ENCODE measurements at regions of chr1 and their contacts with region 1.

Region 1: DNA sequence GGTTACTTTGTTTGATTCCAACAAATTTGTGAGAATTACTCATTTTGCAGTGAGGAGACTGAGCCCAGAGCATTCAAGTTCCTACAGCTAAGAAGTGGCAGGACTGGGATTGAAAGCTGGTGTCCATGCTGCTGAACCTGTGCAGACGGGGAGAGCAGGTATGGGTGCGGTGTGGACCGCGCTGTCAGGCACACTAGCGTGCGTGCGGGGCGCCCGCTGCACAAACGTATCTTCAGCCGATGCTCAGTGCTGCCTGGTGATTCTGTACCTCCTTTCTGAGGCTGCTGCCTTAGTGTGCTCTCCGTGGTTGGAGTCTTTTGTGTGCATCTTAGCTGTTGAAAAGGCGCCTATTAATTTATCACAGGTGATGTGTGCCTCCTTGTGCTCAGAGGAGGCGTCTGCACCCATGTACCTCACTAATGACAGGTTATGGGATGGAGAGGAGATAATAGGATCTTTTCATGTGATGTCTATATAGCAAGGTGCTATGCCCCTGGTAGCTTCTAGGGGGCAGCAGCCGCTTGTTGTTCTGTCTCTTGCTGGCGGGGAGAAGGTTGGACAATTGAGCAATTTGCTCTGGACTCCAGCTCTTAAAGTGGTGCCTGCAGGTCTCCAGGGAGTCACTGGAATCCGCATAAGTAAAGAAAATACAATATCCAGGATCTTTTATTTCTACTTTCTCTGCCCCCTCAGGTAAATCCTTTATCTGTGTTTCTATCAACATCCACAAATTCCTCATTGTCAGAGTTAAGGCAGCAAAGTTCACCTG is 32.5 kb downstream of the PEX14 start:
- DNase-seq: peak; percentile 85

Region 2: GRCh38 chr1:10170239-10170574 is 337.1 kb before region 1 on chr1:
- intact Hi-C with region 1: no loop called
- DNase-seq: no peak

Region 3: DNA sequence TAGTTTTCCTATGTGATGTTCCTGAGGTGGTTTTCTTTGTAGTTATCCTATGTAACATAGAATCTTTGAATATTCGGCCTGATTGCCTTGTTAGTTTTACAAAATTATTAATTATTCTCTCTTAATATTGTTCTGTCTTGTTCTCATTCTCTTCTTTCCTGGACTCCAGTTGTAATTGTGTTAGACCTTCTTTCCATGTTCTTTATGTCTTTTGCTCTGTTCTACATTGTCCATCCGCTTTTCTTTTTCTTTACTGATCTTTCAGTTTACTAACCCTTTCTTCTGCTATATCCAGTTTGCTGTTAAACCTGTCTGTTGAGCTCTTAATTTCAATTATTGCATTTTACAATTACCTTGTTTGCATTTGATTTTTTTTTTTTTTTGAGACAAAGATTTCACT is 56.8 kb after region 1 on chr1:
- intact Hi-C with region 1: no loop called
- DNase-seq: no peak

Region 4: DNA sequence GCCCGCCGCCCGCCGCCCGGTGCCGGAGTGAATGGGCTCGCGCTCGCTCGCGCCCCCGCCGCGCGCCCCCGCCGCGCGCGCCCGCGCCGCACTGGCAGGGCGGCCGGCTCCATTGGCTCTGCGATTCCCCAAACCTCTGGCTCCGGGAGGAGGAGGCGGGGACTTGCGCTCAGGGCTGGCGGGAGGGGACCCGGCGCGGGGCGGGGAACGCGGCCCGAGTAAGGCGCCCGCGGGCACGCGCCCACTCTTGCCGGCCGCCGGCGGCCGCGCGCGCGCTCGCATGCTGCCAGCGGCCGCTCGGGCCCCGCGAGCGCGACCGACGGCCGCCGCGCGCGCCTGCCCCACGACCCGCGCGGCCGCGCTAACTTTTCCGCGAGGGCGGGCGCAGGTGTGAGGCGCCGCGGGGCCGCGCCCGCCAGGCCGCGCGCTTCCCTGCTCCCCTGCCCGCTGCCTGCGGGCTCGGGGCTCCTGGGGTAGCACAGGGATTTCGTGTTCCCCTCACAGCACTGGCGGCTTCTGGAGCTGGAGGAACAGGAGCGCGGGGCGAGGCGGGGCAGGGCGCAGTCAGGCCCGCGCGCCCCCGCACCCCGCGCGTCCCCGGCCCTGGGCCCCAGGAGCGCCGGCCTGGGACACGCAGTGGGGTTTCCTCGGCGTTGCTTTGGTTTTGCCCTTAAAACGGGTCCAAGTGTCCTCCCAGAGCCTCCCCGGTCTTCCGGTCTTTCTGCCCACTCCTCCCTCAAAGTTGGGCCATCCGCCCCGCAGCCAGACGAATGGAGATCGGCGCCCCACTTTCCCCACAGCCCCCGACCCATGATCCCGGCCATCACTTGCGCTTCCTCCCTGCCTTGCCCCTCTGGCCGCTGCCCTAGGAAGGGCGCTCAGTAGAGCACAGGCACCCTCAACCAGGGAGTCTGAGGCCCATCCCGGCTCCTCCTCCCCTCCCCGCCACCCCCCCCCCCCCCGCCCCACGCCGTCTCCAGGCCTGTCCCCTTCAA is 187.6 kb after region 1 on chr1:
- intact Hi-C with region 1: loop called in 1 of 2 experiments (anchors 10 kb)
- DNase-seq: peak; percentile 95

Region 5: DNA sequence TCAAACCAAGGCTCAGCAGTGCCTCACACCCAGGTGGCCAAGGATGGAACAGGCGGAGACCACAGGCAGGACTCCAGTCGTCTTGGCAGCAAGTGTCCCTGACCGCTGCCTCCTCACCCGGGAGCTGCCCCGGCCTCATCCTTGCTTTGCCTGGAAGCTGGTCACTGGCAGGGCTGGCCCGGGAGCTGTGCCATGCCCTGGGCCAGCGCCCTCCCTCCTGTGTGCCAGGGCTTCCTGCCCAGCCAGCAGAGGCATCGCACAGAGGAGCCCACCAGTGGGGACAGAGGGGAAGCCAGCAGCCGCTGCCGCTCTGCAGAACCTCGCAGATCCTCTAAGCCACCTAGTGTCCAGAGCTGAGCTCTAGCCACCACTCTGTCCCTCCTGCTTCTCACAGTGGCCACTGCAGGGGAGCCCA is 281.3 kb after region 1 on chr1:
- intact Hi-C with region 1: loop called (anchors 10 kb)
- DNase-seq: peak; percentile 65

Region 6: GRCh38 chr1:10796019-10796944 is 289.0 kb after region 1 on chr1 and contains the start of gene CASZ1:
- intact Hi-C with region 1: loop called in 1 of 2 experiments (anchors 10 kb)
- DNase-seq: peak; percentile 86
- total RNA-seq, gene CASZ1: 18.4 to 21.5 TPM

Region 7: DNA sequence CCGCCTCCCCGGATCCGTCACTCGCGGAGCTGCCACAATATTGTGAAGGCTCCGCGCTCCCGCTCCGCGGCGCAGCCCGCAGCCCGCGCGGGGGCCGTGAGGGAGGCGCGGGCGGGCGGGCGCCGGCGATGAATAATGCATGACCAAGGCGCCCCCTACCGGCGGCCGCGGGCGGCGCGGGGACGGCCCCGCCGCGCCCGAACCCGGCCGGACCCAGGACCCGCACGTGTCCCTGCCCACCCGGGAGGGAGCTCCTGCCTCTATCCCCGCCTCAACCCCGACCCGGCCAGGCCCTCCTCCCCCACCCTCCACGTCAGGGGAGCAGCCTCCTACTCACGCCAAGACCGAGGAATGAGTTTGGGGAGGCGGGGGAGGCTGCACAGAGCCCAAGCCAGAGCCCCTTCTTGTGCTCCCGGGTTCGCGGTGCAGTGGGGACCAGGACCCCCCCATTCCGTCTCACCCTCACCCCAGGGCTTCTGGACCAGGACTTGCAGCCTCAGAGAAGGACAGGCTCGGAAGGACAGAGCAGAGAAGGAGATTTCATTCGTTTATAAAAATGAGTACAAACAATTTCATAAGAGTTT is 359.9 kb after region 1 on chr1:
- intact Hi-C with region 1: loop called in 1 of 2 experiments (anchors 5 kb)
- DNase-seq: no peak

Measured in posterior vena cava (tissue), 2 donors.